IMR-90 (cell line): ENCODE measurements at regions of chr2 and their contacts with region 1.

Region 1: DNA sequence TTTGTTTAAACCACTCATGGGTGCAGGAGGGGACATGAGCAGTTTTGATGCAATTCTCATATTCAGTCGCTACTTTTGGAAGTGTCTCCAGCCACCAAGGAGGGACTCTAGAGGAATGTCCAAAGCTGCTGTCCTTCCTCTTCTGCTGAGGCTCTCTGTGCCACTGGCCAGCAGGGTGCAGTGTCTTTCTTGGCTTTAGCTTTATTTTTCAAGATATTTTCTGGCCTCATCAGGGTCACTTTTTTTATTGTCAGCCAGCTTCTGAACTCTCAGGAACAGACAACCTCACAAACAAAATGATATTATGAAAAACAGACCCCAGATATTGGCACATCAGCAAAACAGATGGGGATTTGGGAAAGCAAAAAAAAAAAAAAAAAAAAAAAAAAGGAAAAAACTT is 289.3 kb upstream of the ZSWIM2 start:
- DNase-seq: peak; percentile 21
- ATAC-seq: peak; percentile 65
- H3K4me3 ChIP-seq: no peak overlapping the region
- H3K27ac ChIP-seq: no peak overlapping the region
- H3K4me1 ChIP-seq: no peaks in the 10 kb centered on the region
- H3K27me3 ChIP-seq: no peaks in the 10 kb centered on the region
- CTCF ChIP-seq: peak; percentile 51
- POLR2A ChIP-seq: no peak
- RAD21 ChIP-seq: peak; percentile 35; the same call in 1 of the 2 replicates

Region 2: DNA sequence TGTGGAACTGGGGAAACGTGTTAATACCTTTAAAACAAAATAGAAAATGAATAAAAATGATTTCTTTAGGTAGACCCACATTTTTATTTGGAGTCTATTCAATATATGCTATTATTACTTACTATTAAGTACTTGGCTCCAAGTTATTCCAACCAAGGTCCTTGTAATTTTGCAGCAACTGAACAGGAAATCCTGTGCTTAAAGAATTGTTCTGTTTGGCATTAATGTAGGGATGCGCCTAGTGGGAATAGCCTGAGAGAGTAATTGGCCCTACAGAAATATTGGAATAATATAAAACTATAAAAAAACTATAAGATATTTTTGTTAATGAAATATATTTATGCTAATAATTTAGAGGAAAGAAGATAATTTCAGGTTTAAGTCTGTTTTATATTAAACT is 266.4 kb before region 1 on chr2:
- CTCF ChIA-PET with region 1: no interaction called
- POLR2A ChIA-PET with region 1: no interaction called
- dilution Hi-C with region 1: no loop called
- in situ Hi-C with region 1: no loop called
- intact Hi-C with region 1: no loop called
- DNase-seq: no peak
- ATAC-seq: no peak
- H3K4me3 ChIP-seq: no peak overlapping the region
- H3K27ac ChIP-seq: no peak overlapping the region
- H3K4me1 ChIP-seq: no peaks in the 10 kb centered on the region
- H3K27me3 ChIP-seq: no peaks in the 10 kb centered on the region; the same call in 1 of the 2 replicates
- CTCF ChIP-seq: no peak
- POLR2A ChIP-seq: no peak
- RAD21 ChIP-seq: no peak

Region 3: GRCh38 chr2:187081461-187081860 is 56.8 kb before region 1 on chr2:
- CTCF ChIA-PET with region 1: no interaction called
- POLR2A ChIA-PET with region 1: no interaction called
- dilution Hi-C with region 1: no loop called
- in situ Hi-C with region 1: no loop called
- intact Hi-C with region 1: no loop called
- DNase-seq: no peak
- ATAC-seq: no peak
- H3K4me3 ChIP-seq: no peak overlapping the region
- H3K27ac ChIP-seq: no peak overlapping the region
- H3K4me1 ChIP-seq: no peaks in the 10 kb centered on the region
- H3K27me3 ChIP-seq: no peaks in the 10 kb centered on the region
- CTCF ChIP-seq: no peak
- POLR2A ChIP-seq: no peak
- RAD21 ChIP-seq: no peak

Region 4: DNA sequence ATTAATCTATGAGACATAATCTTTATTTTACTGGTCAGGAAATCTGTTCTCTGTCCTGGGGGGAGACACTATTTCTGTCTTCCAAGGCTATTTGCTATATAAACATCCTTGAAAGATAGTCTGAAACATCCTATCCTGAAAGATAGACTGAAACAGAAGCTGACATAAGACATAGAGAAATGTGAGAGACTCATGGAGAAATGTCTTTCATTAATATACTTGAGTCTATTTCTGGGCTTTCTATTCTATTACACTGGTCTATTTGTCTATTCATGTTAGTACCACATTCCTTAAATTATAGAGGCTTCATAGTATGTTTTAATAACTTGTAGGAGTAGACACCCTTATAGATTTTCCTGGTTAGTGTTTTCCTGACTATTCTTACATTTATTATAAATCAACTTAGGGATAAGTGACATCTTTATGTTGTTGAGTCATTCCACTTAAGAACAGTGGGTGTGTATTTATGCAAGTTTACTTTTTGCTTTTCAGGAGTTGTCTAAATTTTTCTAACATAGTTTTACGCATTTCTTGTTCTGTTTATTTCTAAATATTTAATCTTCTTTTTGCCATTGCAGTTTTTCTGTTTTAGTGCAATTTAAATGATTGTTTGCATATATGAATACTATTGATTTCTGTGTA is 44.4 kb before region 1 on chr2:
- CTCF ChIA-PET with region 1: no interaction called
- POLR2A ChIA-PET with region 1: no interaction called
- dilution Hi-C with region 1: no loop called
- in situ Hi-C with region 1: no loop called
- intact Hi-C with region 1: no loop called
- DNase-seq: no peak
- ATAC-seq: no peak
- H3K4me3 ChIP-seq: no peak overlapping the region
- H3K27ac ChIP-seq: no peak overlapping the region
- H3K4me1 ChIP-seq: no peaks in the 10 kb centered on the region
- H3K27me3 ChIP-seq: no peaks in the 10 kb centered on the region
- CTCF ChIP-seq: no peak
- POLR2A ChIP-seq: no peak
- RAD21 ChIP-seq: no peak

Region 5: GRCh38 chr2:187429989-187430388 is 291.7 kb after region 1 on chr2:
- CTCF ChIA-PET with region 1: no interaction called
- POLR2A ChIA-PET with region 1: no interaction called
- dilution Hi-C with region 1: no loop called
- in situ Hi-C with region 1: loop called (anchors 25 kb)
- intact Hi-C with region 1: no loop called
- DNase-seq: peak; percentile 75
- ATAC-seq: peak; percentile 54
- H3K4me3 ChIP-seq: no peak overlapping the region
- H3K27ac ChIP-seq: no peak overlapping the region
- H3K4me1 ChIP-seq: peaks cover under 1% of the 10 kb centered on the region; the same call in 1 of the 2 replicates
- H3K27me3 ChIP-seq: no peaks in the 10 kb centered on the region
- CTCF ChIP-seq: no peak
- POLR2A ChIP-seq: no peak
- RAD21 ChIP-seq: no peak